AG04449 (cell line): ENCODE measurements at regions of chr5 and their contacts with region 1.

Region 1: GRCh38 chr5:42583322-42583721 is 160.1 kb downstream of the GHR start:
- DNase-seq: no peak
- H3K4me3 ChIP-seq: no peak overlapping the region
- CTCF ChIP-seq: peak; percentile 69

Region 2: DNA sequence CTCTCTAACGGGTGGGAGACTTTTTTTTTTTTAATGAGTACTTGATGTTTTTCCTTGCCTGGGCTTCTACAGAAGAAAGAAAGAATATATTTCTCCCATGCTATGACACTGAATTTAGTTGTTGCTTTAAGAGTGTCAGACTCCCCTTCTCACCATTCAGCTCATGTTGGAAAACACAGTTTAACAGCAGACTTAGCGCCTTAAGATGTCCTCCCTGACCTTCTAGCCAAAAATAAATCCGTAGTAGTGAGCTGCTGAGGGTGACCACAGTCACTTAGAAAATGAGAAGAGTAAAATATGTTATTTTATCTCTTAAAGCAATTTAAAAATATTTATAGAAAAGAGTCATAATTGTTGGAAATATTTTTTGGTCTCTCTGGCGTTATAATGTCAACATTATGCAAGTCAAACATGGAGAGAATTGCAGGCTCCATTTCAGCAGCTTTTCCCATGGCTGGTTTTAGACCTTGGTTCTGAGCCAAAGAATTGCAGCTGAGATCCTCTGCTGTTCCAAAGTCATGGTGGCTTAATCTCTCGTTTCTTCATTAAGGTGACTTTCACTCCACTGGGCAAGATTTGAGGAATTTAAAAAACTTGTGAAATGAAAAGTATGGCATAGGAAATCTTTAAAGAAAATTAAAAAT is 16.5 kb before region 1 on chr5:
- CTCF ChIA-PET with region 1: interaction called, 16 read pairs
- POLR2A ChIA-PET with region 1: no interaction called
- DNase-seq: peak; percentile 24
- H3K4me3 ChIP-seq: no peak overlapping the region
- CTCF ChIP-seq: no peak